Tibial artery (tissue), 4 donors: ENCODE measurements at regions of chr11 and their contacts with region 1.

Region 1: GRCh38 chr11:47578524-47579460 is at the starts of genes KBTBD4 and NDUFS3:
- DNase-seq: peak; percentile 89 to 91
- H3K4me3 ChIP-seq: peak within 1 kb of the TSS; percentile 83 to 100
- H3K27ac ChIP-seq: peak within 1 kb of the TSS; percentile 79 to 88
- H3K4me1 ChIP-seq: peaks cover 0 to 33% (median 21%) of the 10 kb centered on the region in 4 donors
- H3K27me3 ChIP-seq: no peaks in the 10 kb centered on the region
- CTCF ChIP-seq: no peak

Region 2: DNA sequence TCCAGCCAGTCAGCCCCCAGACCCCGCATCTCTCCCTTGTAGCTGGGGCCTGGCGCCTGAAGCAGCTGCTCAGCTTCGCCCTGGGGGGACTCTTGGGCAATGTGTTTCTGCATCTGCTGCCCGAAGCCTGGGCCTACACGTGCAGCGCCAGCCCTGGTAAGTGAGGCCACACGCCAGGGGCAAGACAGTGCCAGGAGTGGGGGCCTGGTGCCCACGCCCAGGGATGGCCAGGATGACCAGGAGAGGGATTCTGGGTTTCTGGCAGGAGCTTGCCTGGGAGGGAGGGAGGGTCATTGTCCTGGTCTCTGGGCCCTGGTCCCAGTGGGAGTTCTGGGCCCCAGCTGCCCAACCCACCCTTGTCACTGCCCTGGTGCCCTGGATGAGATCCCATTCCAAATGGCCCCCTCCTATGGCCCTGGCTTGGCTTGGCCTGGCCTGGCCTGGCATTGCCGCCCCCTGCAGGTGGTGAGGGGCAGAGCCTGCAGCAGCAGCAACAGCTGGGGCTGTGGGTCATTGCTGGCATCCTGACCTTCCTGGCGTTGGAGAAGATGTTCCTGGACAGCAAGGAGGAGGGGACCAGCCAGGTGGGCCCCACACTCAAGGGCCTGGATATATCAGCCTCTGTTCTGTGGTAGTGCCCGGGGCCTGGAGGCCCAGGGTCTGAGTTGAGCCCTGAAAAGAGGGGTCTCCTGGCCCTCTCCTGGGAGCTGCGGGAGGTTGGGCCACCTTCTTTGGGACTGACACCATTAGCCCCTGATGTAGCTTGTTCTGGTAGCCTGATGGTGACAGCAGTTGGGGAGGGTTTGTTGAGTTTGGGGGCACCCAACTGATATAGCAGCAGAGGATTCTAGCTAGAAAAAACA is 166.7 kb before region 1 on chr11:
- intact Hi-C with region 1: loop called (anchors 10 kb)
- DNase-seq: no peak
- H3K4me3 ChIP-seq: no peak overlapping the region
- H3K27ac ChIP-seq: peak overlapping the region; percentile 9 to 45
- H3K4me1 ChIP-seq: peaks cover 19 to 82% (median 66%) of the 10 kb centered on the region in 4 donors
- H3K27me3 ChIP-seq: no peaks in the 10 kb centered on the region
- CTCF ChIP-seq: peak; percentile 44 to 64

Region 3: DNA sequence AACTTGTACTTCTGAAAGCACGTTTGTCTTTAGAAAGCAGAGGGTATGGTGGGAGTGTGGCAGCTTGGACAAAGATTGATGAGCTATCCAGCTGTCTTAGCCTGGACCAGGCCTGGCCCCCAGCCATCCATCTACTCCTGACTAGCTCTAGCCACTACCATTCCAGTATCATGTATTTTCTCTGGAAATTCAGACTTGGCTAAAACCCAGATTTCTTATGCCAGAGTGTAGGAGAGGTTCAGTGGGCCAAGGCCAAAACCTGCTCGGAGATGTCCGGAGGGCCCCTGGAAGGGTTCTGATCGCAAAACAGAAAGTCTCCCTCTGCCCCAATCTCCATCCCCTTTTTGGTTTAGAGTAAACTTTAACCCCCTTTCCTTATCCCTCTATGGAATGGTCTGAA is 88.3 kb after region 1 on chr11:
- intact Hi-C with region 1: no loop called
- DNase-seq: no peak
- H3K4me3 ChIP-seq: no peak overlapping the region
- H3K27ac ChIP-seq: no peak overlapping the region
- H3K4me1 ChIP-seq: no peaks in the 10 kb centered on the region
- H3K27me3 ChIP-seq: peaks cover 0 to 3% of the 10 kb centered on the region in 2 donors
- CTCF ChIP-seq: no peak

Region 4: GRCh38 chr11:47766305-47767227 is 187.8 kb after region 1 on chr11:
- intact Hi-C with region 1: loop called (anchors 5 kb)
- DNase-seq: peak; percentile 72 to 82
- H3K4me3 ChIP-seq: peak overlapping the region; percentile 85 to 96
- H3K27ac ChIP-seq: peak overlapping the region; percentile 99
- H3K4me1 ChIP-seq: peaks cover 0 to 35% (median 17%) of the 10 kb centered on the region in 4 donors
- H3K27me3 ChIP-seq: no peaks in the 10 kb centered on the region
- CTCF ChIP-seq: no peak